Left colon (tissue), 2 donors: ENCODE measurements at regions of chr10 and their contacts with region 1.

Region 1: GRCh38 chr10:14822879-14823755 is 14.7 kb downstream of the CDNF start:
- DNase-seq: peak in 1 of 2 donors; percentile 52
- ATAC-seq: peak; percentile 67

Region 2: GRCh38 chr10:14491806-14492205 is 331.3 kb before region 1 on chr10:
- intact Hi-C with region 1: loop called in 1 of 2 experiments (anchors 10 kb)
- DNase-seq: no peak
- ATAC-seq: no peak

Region 3: DNA sequence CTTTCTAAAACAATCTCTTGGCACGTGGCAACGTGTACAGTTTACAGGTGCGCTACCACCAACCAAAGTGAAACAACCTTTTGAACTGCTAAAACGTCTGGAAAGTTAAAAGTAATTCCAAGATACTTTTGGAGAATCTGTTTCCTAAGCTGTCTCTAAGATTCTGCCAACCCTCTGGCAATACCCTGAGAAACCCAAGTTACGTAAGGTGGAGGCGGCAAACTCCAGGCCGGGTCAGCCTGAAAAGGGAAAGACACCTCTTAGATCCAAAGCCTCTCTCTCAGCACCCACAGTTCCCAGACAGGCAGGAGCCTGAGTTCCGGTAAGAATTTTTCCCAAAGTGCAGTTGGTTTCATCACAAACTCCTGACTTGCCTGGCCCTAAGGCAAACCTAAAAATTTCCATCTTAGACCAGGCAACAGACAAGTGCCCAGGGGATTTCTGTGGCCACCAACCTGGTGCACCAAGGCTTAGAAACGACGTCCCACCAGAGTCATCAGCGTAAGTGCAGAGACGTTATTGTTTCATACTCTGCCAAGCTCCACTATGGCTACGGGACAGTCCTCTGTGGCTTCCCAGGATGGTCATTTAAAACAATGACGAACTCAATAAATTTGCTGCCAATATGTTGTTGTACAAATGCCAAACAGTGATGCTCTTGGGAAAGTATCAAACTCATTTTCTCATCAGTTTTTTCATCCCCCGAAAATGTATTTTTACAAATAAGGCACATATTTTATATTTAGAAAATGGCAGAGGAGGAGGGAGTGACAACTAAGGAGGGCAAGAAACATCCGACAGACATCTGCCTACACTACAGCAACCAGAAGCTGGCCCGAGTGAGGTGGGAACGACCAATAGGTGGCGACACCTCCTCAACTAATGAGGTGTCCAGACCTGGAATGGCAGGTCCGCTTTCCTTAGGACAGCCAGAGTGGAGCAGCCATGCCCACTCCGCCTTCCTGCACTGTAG is 286.6 kb before region 1 on chr10:
- intact Hi-C with region 1: loop called in 1 of 2 experiments (anchors 5 kb)
- DNase-seq: peak; percentile 69 to 88
- ATAC-seq: peak; percentile 57

Region 4: GRCh38 chr10:14617852-14618251 is 205.3 kb before region 1 on chr10:
- intact Hi-C with region 1: loop called in 1 of 2 experiments (anchors 10 kb)
- DNase-seq: no peak
- ATAC-seq: no peak

Region 5: DNA sequence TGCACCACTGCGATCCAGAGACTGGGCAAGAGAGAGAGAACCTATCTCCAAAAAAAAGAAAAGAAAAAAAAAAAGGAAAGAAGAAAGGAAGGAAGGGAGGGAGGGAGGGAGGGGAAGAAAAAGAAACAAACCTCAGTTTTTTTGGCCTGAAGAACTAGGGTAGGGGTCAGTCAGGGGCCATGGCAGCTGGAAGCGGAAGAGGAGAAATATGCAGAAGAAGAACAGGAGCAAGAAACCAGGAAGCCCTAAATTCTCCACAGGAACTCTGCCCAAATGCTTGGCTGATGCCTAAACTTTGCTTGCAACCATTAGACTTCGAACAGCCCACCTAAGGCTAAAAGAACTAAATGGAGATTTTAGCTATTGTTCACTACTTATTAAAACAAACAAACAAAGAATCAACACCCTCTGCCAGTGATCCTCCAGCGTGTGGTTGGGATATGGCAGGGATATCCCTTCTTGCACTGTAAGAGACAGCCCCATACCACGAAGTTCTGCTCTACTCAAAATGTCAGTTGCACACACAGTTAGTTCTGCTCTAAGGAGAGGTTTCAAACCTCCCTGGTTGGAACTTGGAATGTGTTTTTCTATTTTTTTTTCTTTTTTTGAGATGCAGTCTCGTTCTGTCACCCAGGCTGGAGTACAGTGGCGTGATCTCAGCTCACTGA is 187.9 kb before region 1 on chr10:
- intact Hi-C with region 1: no loop called
- DNase-seq: no peak
- ATAC-seq: no peak